Dendritic cell treated with granulocyte-macrophage colony-stimulating factor and Interleukin-4, amounts not matched to agents 40 ng/mL and 50 ng/mL, for 4 days (primary cell): ENCODE measurements at regions of chr11 and their contacts with region 1.

Region 1: GRCh38 chr11:33227578-33228262 is 29.5 kb upstream of the HIPK3 start:
- H3K4me3 Mint-ChIP-seq: no peak overlapping the region
- H3K27ac Mint-ChIP-seq: no peak overlapping the region
- H3K4me1 Mint-ChIP-seq: peaks cover 8% of the 10 kb centered on the region
- H3K27me3 Mint-ChIP-seq: no peaks in the 10 kb centered on the region

Region 2: DNA sequence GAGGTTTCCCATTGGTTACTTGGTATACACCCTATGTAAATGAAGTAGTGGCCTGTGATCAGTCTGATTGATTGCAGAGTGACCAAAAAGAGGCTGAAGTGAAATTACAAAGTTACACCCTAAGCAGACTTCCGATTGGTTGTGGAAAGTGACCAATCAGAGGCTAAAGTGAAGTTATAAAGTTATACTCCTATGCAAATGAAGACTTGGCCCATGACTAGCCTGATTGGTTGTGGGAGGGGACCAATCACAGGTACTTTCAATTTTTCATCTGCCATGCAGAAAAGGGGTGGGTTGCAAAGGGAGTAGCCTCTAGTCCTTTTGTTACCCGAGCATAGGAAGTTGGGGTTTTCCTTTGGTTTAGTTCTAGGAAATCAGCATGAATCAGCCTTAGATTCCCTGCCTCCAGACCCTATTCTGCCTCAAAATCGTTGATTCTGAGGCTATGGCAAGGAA is 48.3 kb before region 1 on chr11:
- intact Hi-C with region 1: loop called (anchors 5 kb)
- H3K4me3 Mint-ChIP-seq: no peak overlapping the region
- H3K27ac Mint-ChIP-seq: peak overlapping the region; percentile 82
- H3K4me1 Mint-ChIP-seq: peaks cover 34% of the 10 kb centered on the region
- H3K27me3 Mint-ChIP-seq: no peaks in the 10 kb centered on the region